Thyroid gland (tissue), 4 donors: ENCODE measurements at regions of chr4 and their contacts with region 1.

Region 1: DNA sequence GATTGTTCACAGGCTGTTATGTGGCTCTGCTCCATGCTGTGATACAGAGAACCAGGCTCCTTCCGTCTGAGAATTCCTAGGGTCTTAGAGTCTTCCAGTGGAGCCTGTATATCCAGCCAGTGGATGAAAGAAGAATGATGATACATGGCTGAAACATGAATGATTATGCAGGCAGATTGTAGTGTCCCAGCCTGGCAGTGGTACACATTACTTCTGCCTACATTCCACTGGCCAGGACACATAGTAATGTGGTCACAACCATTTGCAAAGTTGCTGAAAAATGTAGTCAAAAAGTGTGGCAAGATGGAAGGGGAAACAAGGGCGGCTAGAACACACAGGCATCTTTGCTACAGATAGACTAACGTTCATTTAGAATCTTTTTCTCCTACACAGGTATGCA is 4.5 kb upstream of the GBA3 start:
- DNase-seq: no peak
- H3K4me3 ChIP-seq: no peak overlapping the region
- H3K27ac ChIP-seq: no peak overlapping the region
- H3K4me1 ChIP-seq: no peaks in the 10 kb centered on the region
- H3K27me3 ChIP-seq: no peaks in the 10 kb centered on the region
- CTCF ChIP-seq: no peak
- POLR2A ChIP-seq: no peak

Region 2: GRCh38 chr4:21790438-21791029 is 897.7 kb before region 1 on chr4:
- intact Hi-C with region 1: loop called (anchors 5 kb)
- DNase-seq: no peak
- H3K4me3 ChIP-seq: no peak overlapping the region
- H3K27ac ChIP-seq: no peak overlapping the region
- H3K4me1 ChIP-seq: no peaks in the 10 kb centered on the region
- H3K27me3 ChIP-seq: no peaks in the 10 kb centered on the region
- CTCF ChIP-seq: peak in 4 of 6 experiments; percentile 32 to 52 (median 40)
- POLR2A ChIP-seq: no peak

Region 3: GRCh38 chr4:22739968-22740367 is 51.7 kb after region 1 on chr4:
- intact Hi-C with region 1: no loop called
- DNase-seq: peak; percentile 91 to 94
- H3K4me3 ChIP-seq: no peak overlapping the region
- H3K27ac ChIP-seq: peak overlapping the region; percentile 78 to 96 (median 82)
- H3K4me1 ChIP-seq: peaks cover 21 to 25% of the 10 kb centered on the region in 2 donors
- H3K27me3 ChIP-seq: no peaks in the 10 kb centered on the region
- CTCF ChIP-seq: no peak
- POLR2A ChIP-seq: no peak

Region 4: GRCh38 chr4:23083391-23083790 is 395.2 kb after region 1 on chr4:
- intact Hi-C with region 1: no loop called
- DNase-seq: no peak
- H3K4me3 ChIP-seq: no peak overlapping the region
- H3K27ac ChIP-seq: no peak overlapping the region
- H3K4me1 ChIP-seq: no peaks in the 10 kb centered on the region
- H3K27me3 ChIP-seq: no peaks in the 10 kb centered on the region
- CTCF ChIP-seq: no peak
- POLR2A ChIP-seq: no peak